Heart right ventricle (tissue), 16 donors: ENCODE measurements at regions of chr10 and their contacts with region 1.

Region 1: GRCh38 chr10:5534880-5535856 is 10.4 kb downstream of the CALML3 start:
- DNase-seq: no peak
- ATAC-seq: peak; percentile 54 to 91 (median 78)
- H3K4me3 ChIP-seq: no peak overlapping the region
- H3K27ac ChIP-seq: peak overlapping the region in 6 of 10 donors; percentile 8 to 54 (median 26)
- H3K4me1 ChIP-seq: peaks cover 0 to 25% (median 7%) of the 10 kb centered on the region in 9 donors
- H3K27me3 ChIP-seq: no peaks in the 10 kb centered on the region
- CTCF ChIP-seq: no peak

Region 2: GRCh38 chr10:5396556-5397300 is 138.4 kb before region 1 on chr10:
- intact Hi-C with region 1: no loop called
- DNase-seq: no peak
- ATAC-seq: no peak
- H3K4me3 ChIP-seq: no peak overlapping the region
- H3K27ac ChIP-seq: no peak overlapping the region
- H3K4me1 ChIP-seq: no peaks in the 10 kb centered on the region
- H3K27me3 ChIP-seq: peaks cover 0 to 8% (median 0%) of the 10 kb centered on the region in 7 donors
- CTCF ChIP-seq: no peak

Region 3: DNA sequence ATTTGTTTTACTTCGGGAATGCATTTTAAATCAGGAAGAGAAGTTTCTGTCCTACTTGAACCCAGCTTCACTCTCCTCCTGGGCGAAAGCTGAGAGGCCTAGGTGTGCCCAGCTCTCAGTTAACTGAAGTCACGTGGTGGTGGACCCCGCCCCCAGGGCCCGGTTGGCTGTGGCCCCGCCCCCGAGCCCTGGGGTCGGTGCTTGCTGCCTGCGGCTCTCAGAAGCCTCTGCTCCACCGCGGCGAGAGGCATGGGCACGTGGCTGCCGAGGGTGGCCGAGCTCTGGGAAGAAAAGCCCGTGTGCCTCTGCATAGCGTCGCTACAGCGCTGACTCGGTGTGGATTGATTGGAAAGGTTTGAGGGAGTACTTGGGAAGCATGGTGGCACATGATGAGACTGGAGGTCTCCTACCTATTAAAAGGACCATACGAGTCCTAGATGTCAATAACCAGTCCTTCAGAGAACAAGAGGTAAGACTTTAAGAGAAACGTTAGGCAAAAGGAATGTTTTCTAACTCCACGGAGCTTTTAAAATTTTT is 88.7 kb before region 1 on chr10:
- intact Hi-C with region 1: loop called in 3 of 10 experiments (anchors 5 kb)
- DNase-seq: peak; percentile 88 to 89
- ATAC-seq: peak; percentile 95 to 98 (median 97)
- H3K4me3 ChIP-seq: peak overlapping the region; percentile 5 to 64 (median 56)
- H3K27ac ChIP-seq: peak overlapping the region in 9 of 10 donors; percentile 42 to 77 (median 59)
- H3K4me1 ChIP-seq: peaks cover 0 to 43% (median 7%) of the 10 kb centered on the region in 9 donors
- H3K27me3 ChIP-seq: no peaks in the 10 kb centered on the region
- CTCF ChIP-seq: no peak

Region 4: DNA sequence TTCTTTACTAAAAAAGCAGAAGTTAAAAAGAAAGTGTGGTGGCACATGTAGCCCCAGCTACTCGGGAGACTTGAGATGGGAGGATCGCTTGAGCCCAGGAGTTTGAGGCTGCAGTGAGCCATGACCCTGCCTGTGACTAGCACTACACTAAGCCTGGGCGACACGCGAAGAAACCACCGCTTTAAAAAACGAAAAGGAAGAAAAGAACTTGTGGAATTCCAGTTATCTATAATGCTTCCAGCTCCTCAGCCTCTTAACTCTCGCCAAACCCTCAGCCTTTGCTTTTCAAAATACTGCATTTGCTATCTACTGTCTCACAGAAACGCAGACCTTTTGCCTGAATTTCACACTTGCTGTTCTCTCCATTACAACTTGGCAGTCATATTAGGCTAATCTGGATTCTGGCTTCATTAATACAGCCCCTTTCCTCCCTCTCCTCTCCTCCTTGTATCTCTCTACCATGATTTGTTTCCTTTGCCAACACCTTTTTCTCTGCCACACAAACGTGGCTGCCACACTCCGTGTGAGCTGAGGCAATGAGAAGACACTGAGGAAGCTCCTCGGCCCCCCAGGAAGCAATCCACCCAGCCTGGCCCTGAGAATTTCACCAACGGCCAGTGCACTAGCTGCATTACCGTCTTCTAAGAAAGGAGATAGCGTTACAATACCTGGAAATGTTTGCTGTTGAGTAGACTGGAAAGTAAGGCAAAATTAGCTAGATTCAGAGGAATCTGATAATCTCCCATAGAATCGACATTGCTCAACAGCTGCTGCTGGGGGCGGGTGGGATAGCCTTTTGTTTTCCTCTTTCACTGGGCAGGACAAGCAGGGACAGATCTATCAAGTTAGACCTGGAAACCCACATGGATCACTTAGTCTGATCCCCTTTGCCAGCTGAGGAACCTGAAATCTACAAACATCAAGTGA is 73.0 kb before region 1 on chr10:
- intact Hi-C with region 1: loop called in 1 of 10 experiments (anchors 5 kb)
- DNase-seq: no peak
- ATAC-seq: no peak
- H3K4me3 ChIP-seq: no peak overlapping the region
- H3K27ac ChIP-seq: no peak overlapping the region
- H3K4me1 ChIP-seq: peaks cover 0 to 12% (median 3%) of the 10 kb centered on the region in 9 donors
- H3K27me3 ChIP-seq: no peaks in the 10 kb centered on the region
- CTCF ChIP-seq: no peak

Region 5: GRCh38 chr10:5551531-5552375 is 16.6 kb after region 1 on chr10:
- intact Hi-C with region 1: no loop called
- DNase-seq: no peak
- ATAC-seq: no peak
- H3K4me3 ChIP-seq: no peak overlapping the region
- H3K27ac ChIP-seq: no peak overlapping the region
- H3K4me1 ChIP-seq: peaks cover 0 to 38% (median 21%) of the 10 kb centered on the region in 9 donors
- H3K27me3 ChIP-seq: no peaks in the 10 kb centered on the region
- CTCF ChIP-seq: no peak

Region 6: GRCh38 chr10:5614155-5614721 is 79.1 kb after region 1 on chr10:
- intact Hi-C with region 1: loop called in 1 of 10 experiments (anchors 10 kb)
- DNase-seq: no peak
- ATAC-seq: peak in 5 of 8 donors; percentile 9 to 31 (median 28)
- H3K4me3 ChIP-seq: no peak overlapping the region
- H3K27ac ChIP-seq: peak overlapping the region in 6 of 10 donors; percentile 6 to 56 (median 32)
- H3K4me1 ChIP-seq: peaks cover 0 to 42% (median 17%) of the 10 kb centered on the region in 9 donors
- H3K27me3 ChIP-seq: peaks cover 0 to 9% (median 0%) of the 10 kb centered on the region in 7 donors
- CTCF ChIP-seq: no peak

Region 7: DNA sequence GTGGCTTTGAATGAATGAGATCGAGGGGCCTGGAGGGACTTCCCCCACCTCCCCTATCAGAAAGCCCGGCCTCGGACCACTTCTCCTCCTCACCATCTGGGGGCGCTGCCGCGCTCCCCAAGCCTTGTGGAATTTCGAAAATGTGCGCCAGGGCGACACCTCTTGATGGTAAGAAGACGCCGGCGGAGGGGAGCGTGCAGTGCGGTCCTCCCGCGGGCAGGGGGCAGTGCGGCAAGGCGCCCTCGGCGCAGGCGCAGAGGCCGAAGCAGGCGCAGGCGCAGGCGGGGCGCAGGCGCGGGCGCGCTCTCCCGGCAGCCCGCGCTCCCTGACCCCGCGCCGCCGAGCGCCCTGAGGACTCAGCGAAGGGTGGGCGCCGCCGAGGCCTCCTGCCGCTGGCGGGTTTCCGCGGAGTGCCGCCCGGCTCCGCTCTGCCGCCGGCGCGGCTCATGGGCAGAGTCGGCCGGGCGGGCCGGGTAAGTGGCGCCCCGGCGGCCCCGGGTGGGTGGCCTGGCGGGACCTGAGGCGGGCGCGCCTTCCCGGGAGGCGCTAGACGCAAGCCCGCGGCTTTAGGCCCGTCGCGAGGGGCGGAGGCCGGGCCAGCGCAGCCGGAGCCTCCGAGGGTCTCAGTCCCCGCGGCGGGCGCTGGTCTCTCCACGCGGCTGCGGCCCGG is 553.7 kb after region 1 on chr10 and contains the start of gene RBM17:
- intact Hi-C with region 1: no loop called
- DNase-seq: peak; percentile 95 to 96
- ATAC-seq: peak; percentile 85 to 97 (median 92)
- H3K4me3 ChIP-seq: peak within 1 kb of the TSS; percentile 67 to 95 (median 88)
- H3K27ac ChIP-seq: peak within 1 kb of the TSS; percentile 81 to 97 (median 94)
- H3K4me1 ChIP-seq: peaks cover 8 to 70% (median 59%) of the 10 kb centered on the region in 9 donors
- H3K27me3 ChIP-seq: peaks cover 0 to 3% (median 0%) of the 10 kb centered on the region in 7 donors
- CTCF ChIP-seq: peak; percentile 99 to 100 (median 100)
- total RNA-seq, gene RBM17: 53.4 to 93.2 (median 64.0) TPM